CD8-positive, alpha-beta T cell (primary cell): ENCODE measurements at regions of chr2 and their contacts with region 1.

Region 1: GRCh38 chr2:190940454-190940853 is 59.8 kb downstream of the GLS start:
- DNase-seq: no peak
- ATAC-seq: no peak
- H3K4me3 ChIP-seq: no peak overlapping the region
- H3K4me3 Mint-ChIP-seq: no peak overlapping the region
- H3K27ac ChIP-seq: no peak overlapping the region
- H3K27ac Mint-ChIP-seq: no peak overlapping the region
- H3K4me1 ChIP-seq: peaks cover 3% of the 10 kb centered on the region
- H3K4me1 Mint-ChIP-seq: peaks cover 26% of the 10 kb centered on the region
- H3K27me3 ChIP-seq: no peaks in the 10 kb centered on the region
- H3K27me3 Mint-ChIP-seq: no peaks in the 10 kb centered on the region
- CTCF ChIP-seq: no peak

Region 2: GRCh38 chr2:190922376-190922775 is 18.1 kb before region 1 on chr2:
- CTCF ChIA-PET with region 1: interaction called, 3 read pairs
- POLR2A ChIA-PET with region 1: no interaction called
- intact Hi-C with region 1: loop called in 1 of 2 experiments (anchors 2 kb)
- DNase-seq: no peak
- ATAC-seq: no peak
- H3K4me3 ChIP-seq: no peak overlapping the region
- H3K4me3 Mint-ChIP-seq: no peak overlapping the region
- H3K27ac ChIP-seq: no peak overlapping the region
- H3K27ac Mint-ChIP-seq: peak overlapping the region; percentile 12
- H3K4me1 ChIP-seq: peaks cover under 1% of the 10 kb centered on the region
- H3K4me1 Mint-ChIP-seq: peaks cover 15% of the 10 kb centered on the region
- H3K27me3 ChIP-seq: no peaks in the 10 kb centered on the region
- H3K27me3 Mint-ChIP-seq: no peaks in the 10 kb centered on the region
- CTCF ChIP-seq: no peak

Region 3: GRCh38 chr2:191128172-191128910 is 187.9 kb after region 1 on chr2:
- CTCF ChIA-PET with region 1: no interaction called
- POLR2A ChIA-PET with region 1: no interaction called
- intact Hi-C with region 1: no loop called
- DNase-seq: peak in 2 of 9 experiments; percentile 68 to 79
- ATAC-seq: peak; percentile 78
- H3K4me3 ChIP-seq: peak overlapping the region; percentile 0 to 31
- H3K4me3 Mint-ChIP-seq: peak overlapping the region; percentile 60
- H3K27ac ChIP-seq: peak overlapping the region; percentile 39 to 91
- H3K27ac Mint-ChIP-seq: peak overlapping the region; percentile 62
- H3K4me1 ChIP-seq: peaks cover 38% of the 10 kb centered on the region
- H3K4me1 Mint-ChIP-seq: peaks cover 70% of the 10 kb centered on the region
- H3K27me3 ChIP-seq: no peaks in the 10 kb centered on the region
- H3K27me3 Mint-ChIP-seq: no peaks in the 10 kb centered on the region
- CTCF ChIP-seq: no peak